CD8-positive, alpha-beta memory T cell (primary cell): ENCODE measurements at regions of chr14 and their contacts with region 1.

Region 1: GRCh38 chr14:22929104-22929847 is at the start of gene PRMT5:
- DNase-seq: peak; percentile 95 to 99 (median 97)
- H3K4me3 ChIP-seq: peak within 1 kb of the TSS; percentile 92
- H3K4me3 Mint-ChIP-seq: no peak within 1 kb of the TSS
- H3K27ac ChIP-seq: peak within 1 kb of the TSS; percentile 87
- H3K27ac Mint-ChIP-seq: peak within 1 kb of the TSS in 1 of 8 donors; percentile 16
- H3K4me1 ChIP-seq: peaks cover 18% of the 10 kb centered on the region
- H3K4me1 Mint-ChIP-seq: peaks cover 8 to 21% (median 16%) of the 10 kb centered on the region in 3 donors
- H3K27me3 ChIP-seq: no peaks in the 10 kb centered on the region
- H3K27me3 Mint-ChIP-seq: no peaks in the 10 kb centered on the region
- total RNA-seq, gene PRMT5: 191 to 200 TPM

Region 2: DNA sequence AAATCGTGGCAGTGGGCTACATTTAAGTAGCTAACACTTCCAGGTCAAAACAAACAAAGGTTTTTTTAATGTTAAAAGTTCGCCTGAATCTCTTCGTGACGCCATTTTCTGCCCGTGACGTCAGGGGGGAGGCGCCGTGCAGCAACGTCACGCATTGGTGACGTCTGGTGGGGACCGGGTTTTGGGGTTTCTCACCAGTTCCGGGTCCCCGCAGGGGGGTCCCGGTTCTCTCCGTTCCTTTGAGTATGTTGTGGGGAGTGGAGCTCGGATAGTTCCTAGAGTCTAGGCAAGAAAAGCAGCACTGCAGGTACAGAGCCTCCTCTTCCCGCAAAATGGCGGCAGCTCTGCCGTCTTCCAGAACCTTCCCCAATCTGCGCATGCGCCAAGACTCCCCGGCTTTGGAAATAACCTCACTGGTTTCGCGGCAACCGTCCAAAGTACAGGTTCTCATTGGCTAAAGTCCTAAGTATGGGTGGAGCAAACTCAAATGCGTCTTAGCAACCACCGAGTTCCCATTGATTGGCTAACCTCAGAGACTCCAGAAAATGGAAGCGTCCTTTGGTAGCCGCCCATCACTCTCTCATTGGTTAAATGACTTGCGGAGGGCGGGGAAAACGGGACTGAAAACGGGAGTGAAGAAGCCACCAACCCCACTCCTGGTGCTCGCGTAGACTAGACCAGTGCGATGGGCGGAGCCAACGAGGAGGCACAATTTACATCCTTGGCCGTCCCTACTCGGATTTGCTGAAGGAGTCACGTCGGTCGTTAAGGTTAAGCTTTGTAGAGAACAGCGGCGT is 10.3 kb before region 1 on chr14 and contains the start of gene RBM23:
- CTCF ChIA-PET with region 1: interaction called, 28 read pairs
- POLR2A ChIA-PET with region 1: interaction called, 12 read pairs
- DNase-seq: peak; percentile 99 to 100 (median 100)
- H3K4me3 ChIP-seq: peak within 1 kb of the TSS; percentile 95
- H3K4me3 Mint-ChIP-seq: peak within 1 kb of the TSS; percentile 91 to 100 (median 97)
- H3K27ac ChIP-seq: peak within 1 kb of the TSS; percentile 100
- H3K27ac Mint-ChIP-seq: peak within 1 kb of the TSS; percentile 99 to 100 (median 100)
- H3K4me1 ChIP-seq: peaks cover 30% of the 10 kb centered on the region
- H3K4me1 Mint-ChIP-seq: peaks cover 36 to 56% (median 56%) of the 10 kb centered on the region in 3 donors
- H3K27me3 ChIP-seq: no peaks in the 10 kb centered on the region
- H3K27me3 Mint-ChIP-seq: peaks cover 0 to 7% of the 10 kb centered on the region in 2 donors
- total RNA-seq, gene RBM23: 83.6 to 88.8 TPM

Region 3: DNA sequence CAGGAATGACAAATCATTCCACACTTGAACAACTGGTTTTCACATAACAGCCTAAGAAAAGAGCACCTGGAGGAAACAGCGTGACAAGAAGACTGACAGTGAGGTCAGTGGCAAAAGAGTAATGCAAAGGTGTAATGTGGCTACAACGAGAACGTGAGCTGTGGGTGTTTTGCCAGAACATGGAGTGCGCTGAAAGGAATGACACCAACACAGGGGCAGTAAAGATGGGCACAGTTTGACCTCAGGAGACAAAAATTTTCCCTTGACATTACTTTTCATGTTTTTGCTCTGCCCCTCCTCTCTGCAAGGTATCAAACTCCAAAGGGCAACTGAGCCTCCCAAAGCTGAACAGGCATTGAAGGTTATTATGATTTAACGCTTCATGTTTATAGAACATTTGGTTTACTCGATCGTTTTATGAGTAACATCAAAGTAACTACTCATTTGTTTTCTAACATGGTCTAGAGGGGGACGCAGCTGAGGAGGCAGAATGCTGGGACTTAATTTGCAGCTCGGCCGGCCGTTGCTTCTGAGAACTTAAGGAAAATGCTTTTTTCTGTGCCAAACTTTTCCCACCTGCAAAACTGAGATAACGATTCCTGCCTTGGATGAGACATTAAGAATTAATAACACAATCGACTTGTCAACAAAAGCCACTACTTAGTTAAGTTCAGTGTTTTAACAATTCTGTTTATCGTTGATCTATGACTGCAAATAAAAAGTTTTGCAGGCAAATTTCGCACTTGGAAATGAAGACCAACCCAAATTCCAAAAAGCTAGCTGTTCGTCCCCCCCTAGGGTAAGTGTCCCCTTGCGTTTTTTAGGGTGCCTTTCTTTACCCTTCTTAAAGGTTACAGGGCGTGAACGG is 26.7 kb after region 1 on chr14:
- CTCF ChIA-PET with region 1: interaction called, 14 read pairs
- POLR2A ChIA-PET with region 1: interaction called, 5 read pairs
- DNase-seq: no peak
- H3K4me3 ChIP-seq: peak overlapping the region; percentile 87
- H3K4me3 Mint-ChIP-seq: peak overlapping the region; percentile 89 to 96 (median 91)
- H3K27ac ChIP-seq: peak overlapping the region; percentile 84
- H3K27ac Mint-ChIP-seq: peak overlapping the region; percentile 67 to 97 (median 90)
- H3K4me1 ChIP-seq: peaks cover 19% of the 10 kb centered on the region
- H3K4me1 Mint-ChIP-seq: peaks cover 14 to 24% (median 17%) of the 10 kb centered on the region in 3 donors
- H3K27me3 ChIP-seq: no peaks in the 10 kb centered on the region
- H3K27me3 Mint-ChIP-seq: no peaks in the 10 kb centered on the region

Region 4: GRCh38 chr14:22986508-22987054 is 57.3 kb after region 1 on chr14:
- CTCF ChIA-PET with region 1: interaction called, 16 read pairs
- POLR2A ChIA-PET with region 1: interaction called, 3 read pairs
- DNase-seq: peak; percentile 75 to 89 (median 79)
- H3K4me3 ChIP-seq: no peak overlapping the region
- H3K4me3 Mint-ChIP-seq: peak overlapping the region in 1 of 7 donors; percentile 60
- H3K27ac ChIP-seq: no peak overlapping the region
- H3K27ac Mint-ChIP-seq: peak overlapping the region in 2 of 8 donors; percentile 12 to 29
- H3K4me1 ChIP-seq: peaks cover 7% of the 10 kb centered on the region
- H3K4me1 Mint-ChIP-seq: no peaks in the 10 kb centered on the region
- H3K27me3 ChIP-seq: no peaks in the 10 kb centered on the region
- H3K27me3 Mint-ChIP-seq: no peaks in the 10 kb centered on the region

Region 5: DNA sequence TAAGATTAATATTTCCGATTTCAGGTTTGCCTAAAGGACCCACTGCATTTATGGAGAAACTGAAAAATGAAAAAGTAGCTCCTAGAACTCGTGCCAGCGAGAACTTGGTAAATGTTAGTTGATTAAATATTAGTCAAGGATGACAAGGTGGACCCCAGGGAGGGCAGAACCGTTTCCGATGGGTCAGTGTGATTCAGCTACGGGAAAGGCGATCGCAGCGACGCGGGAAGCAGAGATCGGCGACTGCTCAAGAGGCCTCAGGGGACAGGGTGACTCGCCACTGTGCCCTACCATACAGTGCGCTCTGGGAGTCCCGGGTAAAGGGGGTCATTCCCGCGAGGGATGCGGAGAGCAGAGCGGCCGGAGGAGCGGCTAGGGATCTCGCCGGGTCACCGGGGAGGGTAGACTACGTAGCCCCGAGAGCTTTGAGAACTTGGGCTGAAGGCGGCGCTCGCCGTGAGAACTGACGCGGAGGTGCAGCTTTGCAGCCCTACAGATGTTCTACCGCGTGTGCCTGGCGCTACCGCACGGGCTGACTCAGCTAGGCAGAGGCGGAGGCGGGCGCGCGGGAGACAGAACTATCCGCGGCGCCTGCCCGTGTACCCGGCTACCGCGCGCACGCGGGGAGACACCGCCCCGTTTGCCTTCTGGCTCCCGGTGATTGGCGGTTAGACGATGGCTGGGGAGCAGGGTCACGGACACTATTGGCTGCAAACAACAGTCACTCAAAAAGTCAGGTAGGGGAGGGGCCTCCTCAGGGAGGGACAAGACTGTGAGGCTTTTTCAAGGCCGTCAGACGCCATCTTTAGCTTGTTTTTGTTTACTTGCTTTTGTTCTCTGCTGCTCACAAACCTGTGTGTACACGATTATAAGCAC is 77.5 kb after region 1 on chr14:
- CTCF ChIA-PET with region 1: interaction called, 3 read pairs
- POLR2A ChIA-PET with region 1: interaction called, 12 read pairs
- DNase-seq: peak; percentile 95 to 99 (median 98)
- H3K4me3 ChIP-seq: peak overlapping the region; percentile 68
- H3K4me3 Mint-ChIP-seq: peak overlapping the region; percentile 90 to 98 (median 97)
- H3K27ac ChIP-seq: peak overlapping the region; percentile 88
- H3K27ac Mint-ChIP-seq: peak overlapping the region; percentile 84 to 99 (median 98)
- H3K4me1 ChIP-seq: peaks cover 36% of the 10 kb centered on the region
- H3K4me1 Mint-ChIP-seq: peaks cover 40 to 56% (median 55%) of the 10 kb centered on the region in 3 donors
- H3K27me3 ChIP-seq: no peaks in the 10 kb centered on the region
- H3K27me3 Mint-ChIP-seq: no peaks in the 10 kb centered on the region